ENCODE measurements at regions of chr17 and their contacts with region 1.

Region 1: DNA sequence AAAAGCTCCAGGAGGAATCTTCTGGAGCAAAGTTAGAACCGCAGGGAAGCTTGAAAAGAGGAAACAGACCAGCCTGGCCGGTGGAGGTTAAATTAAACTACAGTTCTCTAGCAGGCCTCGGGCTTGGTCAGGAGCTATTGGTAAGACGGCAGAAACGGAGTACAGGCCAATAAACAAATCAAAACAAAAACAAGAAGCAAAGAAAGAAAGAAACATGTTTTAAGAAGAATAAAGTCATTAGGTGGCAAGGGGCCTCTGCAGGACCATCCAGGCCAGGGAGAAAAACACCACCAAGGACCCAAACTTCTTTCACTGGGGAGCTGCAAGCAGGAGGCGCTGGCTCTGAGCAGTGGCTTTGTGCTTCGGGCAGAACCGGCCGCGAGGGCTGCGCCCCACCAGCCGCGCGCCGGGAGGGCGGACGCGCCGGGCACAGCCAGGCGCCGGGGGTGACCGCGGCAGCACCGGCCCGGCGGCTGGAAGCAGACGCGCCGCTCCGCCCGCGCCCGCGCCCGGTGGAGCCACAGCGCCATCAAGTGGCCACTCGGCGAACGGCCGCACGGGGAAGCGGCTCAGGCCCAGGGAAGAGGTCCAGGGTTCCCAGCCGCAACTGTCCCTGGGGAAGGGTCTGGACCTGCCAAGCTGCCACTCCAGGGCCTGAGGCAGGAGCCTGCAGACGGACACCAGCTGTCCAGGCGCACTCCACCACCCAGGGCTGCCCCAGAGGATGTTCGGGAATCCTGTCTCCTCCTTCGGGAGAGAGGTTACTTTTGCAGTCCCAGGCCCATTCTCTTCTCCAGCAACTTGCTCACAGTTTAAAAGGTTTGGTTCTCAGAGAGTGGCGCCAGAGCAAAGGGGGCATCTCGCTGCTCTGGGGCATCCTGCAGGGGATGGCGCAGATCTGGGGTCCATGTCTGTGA is 419.4 kb downstream of the SOX9 start:
- DNase-seq: peak; percentile 18
- H3K4me3 ChIP-seq: no peak overlapping the region
- H3K27ac ChIP-seq: no peak overlapping the region
- H3K4me1 ChIP-seq: no peaks in the 10 kb centered on the region
- H3K27me3 ChIP-seq: no peaks in the 10 kb centered on the region
- CTCF ChIP-seq: peak; percentile 73 to 83
- POLR2A ChIP-seq: no peak

Region 2: DNA sequence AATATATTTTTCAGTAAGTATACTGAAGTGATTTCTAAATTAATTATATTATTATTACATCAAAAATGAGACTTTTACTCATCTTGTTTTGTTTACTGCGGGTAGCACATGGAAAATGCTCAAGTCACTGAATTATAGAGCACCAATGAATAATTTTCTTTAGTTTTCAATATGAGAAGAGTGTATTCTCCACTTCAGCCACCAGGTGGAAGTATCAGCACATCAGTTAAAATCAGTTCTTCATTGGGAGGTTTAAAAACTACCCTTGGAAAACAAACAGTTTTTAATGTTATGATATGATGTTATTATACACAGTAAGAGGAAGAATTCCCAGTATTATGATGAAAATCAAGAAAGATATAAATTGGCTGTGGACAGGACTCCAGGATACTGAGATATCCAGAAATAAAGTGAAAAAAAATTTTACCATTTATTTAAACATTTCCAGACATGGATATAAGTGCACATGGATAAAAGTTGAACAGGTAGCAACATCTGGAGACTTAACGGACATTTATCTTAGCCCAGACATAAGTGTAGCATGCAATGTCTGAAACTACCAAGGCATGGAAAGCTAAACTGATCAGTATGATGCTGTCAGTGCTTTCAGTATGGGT is 1903.6 kb before region 1 on chr17:
- CTCF ChIA-PET with region 1: interaction called, 7 read pairs
- POLR2A ChIA-PET with region 1: no interaction called
- dilution Hi-C with region 1: no loop called
- intact Hi-C with region 1: loop called (anchors 1 kb)
- DNase-seq: peak; percentile 61
- H3K4me3 ChIP-seq: no peak overlapping the region
- H3K27ac ChIP-seq: no peak overlapping the region
- H3K4me1 ChIP-seq: no peaks in the 10 kb centered on the region
- H3K27me3 ChIP-seq: peaks cover 2 to 8% of the 10 kb centered on the region in 2 experiments
- CTCF ChIP-seq: peak; percentile 31 to 45
- POLR2A ChIP-seq: no peak

Region 3: DNA sequence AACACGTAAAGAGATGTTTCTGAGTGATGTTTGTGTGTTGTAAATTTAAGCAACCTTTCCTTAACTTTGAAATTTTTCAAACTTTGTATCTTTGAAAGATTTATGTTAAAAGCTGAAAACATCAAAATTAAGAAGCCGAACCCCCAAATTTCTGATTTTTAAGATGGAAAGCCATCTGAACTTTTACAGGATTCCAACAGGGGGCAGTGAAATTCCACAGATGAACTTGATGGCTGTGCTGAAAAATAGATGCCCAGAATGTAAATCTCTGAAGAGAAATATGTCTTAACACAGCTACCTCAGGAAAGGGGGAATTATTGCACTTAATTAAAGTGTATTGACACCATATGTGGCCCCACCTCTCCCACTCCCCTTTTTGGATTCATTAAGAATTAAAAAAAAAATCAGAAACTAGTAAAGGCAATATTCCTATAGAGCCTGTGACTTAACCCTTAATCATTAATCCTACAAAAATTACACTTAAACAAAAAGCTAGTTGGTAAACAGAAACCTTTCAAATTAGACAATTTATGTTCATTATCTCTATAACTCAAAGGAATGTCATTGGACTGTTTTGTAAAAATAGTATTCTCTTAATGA is 1773.0 kb before region 1 on chr17:
- CTCF ChIA-PET with region 1: interaction called, 14 read pairs
- POLR2A ChIA-PET with region 1: no interaction called
- dilution Hi-C with region 1: no loop called
- intact Hi-C with region 1: loop called (anchors 1 kb)
- DNase-seq: no peak
- H3K4me3 ChIP-seq: no peak overlapping the region
- H3K27ac ChIP-seq: no peak overlapping the region
- H3K4me1 ChIP-seq: no peaks in the 10 kb centered on the region
- H3K27me3 ChIP-seq: no peaks in the 10 kb centered on the region
- CTCF ChIP-seq: peak; percentile 17 to 23
- POLR2A ChIP-seq: no peak

Region 4: GRCh38 chr17:72120642-72121163 is 419.5 kb before region 1 on chr17 and contains the start of gene SOX9:
- CTCF ChIA-PET with region 1: interaction called, 5 read pairs
- POLR2A ChIA-PET with region 1: no interaction called
- dilution Hi-C with region 1: no loop called
- intact Hi-C with region 1: loop called (anchors 5 kb)
- DNase-seq: no peak
- H3K4me3 ChIP-seq: no peak within 1 kb of the TSS
- H3K27ac ChIP-seq: no peak within 1 kb of the TSS
- H3K4me1 ChIP-seq: no peaks in the 10 kb centered on the region
- H3K27me3 ChIP-seq: peaks cover 55 to 84% of the 10 kb centered on the region in 2 experiments
- CTCF ChIP-seq: no peak
- POLR2A ChIP-seq: no peak
- total RNA-seq, gene SOX9: not detected in 2 replicates